HEK293 (cell line): ENCODE measurements at regions of chr6 and their contacts with region 1.

Region 1: GRCh38 chr6:15871276-15871675 is 208.4 kb upstream of the DTNBP1 start:
- H3K4me3 ChIP-seq: no peak overlapping the region
- H3K27ac ChIP-seq: no peak overlapping the region
- H3K4me1 ChIP-seq: no peaks in the 10 kb centered on the region
- CTCF ChIP-seq: no peak

Region 2: GRCh38 chr6:15791448-15792181 is 79.7 kb before region 1 on chr6:
- CTCF ChIA-PET with region 1: no interaction called
- POLR2A ChIA-PET with region 1: interaction called, 10 read pairs
- H3K4me3 ChIP-seq: no peak overlapping the region
- H3K27ac ChIP-seq: no peak overlapping the region
- H3K4me1 ChIP-seq: no peaks in the 10 kb centered on the region
- CTCF ChIP-seq: no peak

Region 3: DNA sequence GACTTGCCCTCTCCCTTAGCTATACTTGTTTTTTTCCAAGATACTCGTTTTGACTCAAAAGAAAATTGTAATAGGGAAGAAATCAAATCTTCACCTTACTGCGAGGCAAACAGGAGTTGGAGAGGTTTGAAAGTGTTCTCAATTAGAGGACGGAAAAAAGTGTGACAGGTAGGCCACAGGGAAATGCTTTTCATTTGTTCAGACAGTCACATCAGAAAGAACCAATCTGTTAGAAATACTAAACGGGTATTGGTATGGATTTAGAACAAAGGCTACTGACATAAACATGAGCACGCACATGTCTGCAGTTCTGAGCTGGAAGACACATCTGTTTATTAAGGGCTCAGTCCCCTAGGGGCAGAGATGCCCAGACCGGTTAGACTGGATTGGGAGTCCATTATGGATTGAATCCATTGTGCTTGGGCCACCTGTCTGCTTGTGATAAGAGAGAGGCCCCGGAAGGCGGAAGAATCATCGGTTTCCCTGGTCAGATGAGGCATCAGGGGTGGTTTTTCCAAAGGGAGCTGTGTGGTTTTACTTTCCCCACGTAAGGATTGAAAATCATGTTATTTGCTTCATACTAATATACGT is 36.7 kb after region 1 on chr6:
- CTCF ChIA-PET with region 1: no interaction called
- POLR2A ChIA-PET with region 1: no interaction called
- H3K4me3 ChIP-seq: no peak overlapping the region
- H3K27ac ChIP-seq: no peak overlapping the region
- H3K4me1 ChIP-seq: peaks cover 8% of the 10 kb centered on the region
- CTCF ChIP-seq: no peak

Region 4: GRCh38 chr6:15996030-15996429 is 124.8 kb after region 1 on chr6:
- CTCF ChIA-PET with region 1: no interaction called
- POLR2A ChIA-PET with region 1: no interaction called
- H3K4me3 ChIP-seq: no peak overlapping the region
- H3K27ac ChIP-seq: no peak overlapping the region
- H3K4me1 ChIP-seq: no peaks in the 10 kb centered on the region
- CTCF ChIP-seq: no peak